CD4-positive, alpha-beta T cell (primary cell): ENCODE measurements at regions of chr1 and their contacts with region 1.

Region 1: DNA sequence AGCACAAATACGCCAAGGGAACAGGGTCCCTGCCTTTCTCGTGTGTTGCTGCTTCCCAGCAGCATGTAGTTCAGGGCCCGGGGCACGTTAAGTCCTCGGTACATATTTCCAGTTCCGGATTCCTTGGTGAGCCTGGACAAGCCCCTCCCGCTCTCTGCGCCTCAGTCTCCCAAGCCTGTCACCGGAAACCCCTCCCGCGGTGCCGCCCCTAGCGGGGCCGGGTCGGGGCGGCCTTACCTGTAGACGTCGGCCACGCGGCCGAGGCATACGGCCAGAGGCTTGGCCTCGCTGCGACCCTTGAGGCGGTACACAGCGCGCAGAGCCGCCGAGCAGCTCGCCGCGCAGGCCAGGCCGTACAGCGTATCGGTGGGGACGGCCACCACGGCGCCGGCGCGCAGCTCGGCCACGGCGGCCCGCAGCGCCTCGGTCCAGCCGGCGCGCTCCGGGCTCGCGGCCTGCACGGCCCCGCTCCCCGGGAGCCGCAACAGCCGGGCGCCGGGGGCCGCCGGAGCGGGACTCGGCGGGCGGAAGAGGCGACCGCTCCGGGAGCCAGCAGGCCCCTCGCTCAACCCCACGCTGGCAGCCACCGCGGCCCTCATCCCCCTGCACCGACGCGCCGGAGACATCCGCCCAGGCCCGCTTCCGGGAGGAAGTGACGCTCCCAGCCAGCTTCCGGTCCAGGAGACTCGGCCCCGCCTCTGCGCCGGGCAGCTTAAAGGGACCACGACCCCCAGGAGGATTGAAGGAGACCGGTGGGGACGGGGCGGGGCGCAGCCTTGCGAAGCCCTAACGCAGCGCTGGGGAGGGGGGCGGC is at the starts of genes C1orf122 and YRDC:
- DNase-seq: peak; percentile 85 to 95 (median 90)
- ATAC-seq: peak; percentile 89
- H3K4me3 ChIP-seq: peak within 1 kb of the TSS; percentile 82
- H3K4me3 Mint-ChIP-seq: peak within 1 kb of the TSS; percentile 97
- H3K27ac ChIP-seq: peak within 1 kb of the TSS; percentile 85
- H3K27ac Mint-ChIP-seq: peak within 1 kb of the TSS; percentile 97
- H3K4me1 ChIP-seq: peaks cover 35% of the 10 kb centered on the region
- H3K4me1 Mint-ChIP-seq: peaks cover 44% of the 10 kb centered on the region
- H3K27me3 ChIP-seq: no peaks in the 10 kb centered on the region
- H3K27me3 Mint-ChIP-seq: no peaks in the 10 kb centered on the region
- CTCF ChIP-seq: no peak
- total RNA-seq, gene C1orf122: 10.9 to 13.2 TPM
- total RNA-seq, gene YRDC: 31.1 to 31.2 TPM

Region 2: DNA sequence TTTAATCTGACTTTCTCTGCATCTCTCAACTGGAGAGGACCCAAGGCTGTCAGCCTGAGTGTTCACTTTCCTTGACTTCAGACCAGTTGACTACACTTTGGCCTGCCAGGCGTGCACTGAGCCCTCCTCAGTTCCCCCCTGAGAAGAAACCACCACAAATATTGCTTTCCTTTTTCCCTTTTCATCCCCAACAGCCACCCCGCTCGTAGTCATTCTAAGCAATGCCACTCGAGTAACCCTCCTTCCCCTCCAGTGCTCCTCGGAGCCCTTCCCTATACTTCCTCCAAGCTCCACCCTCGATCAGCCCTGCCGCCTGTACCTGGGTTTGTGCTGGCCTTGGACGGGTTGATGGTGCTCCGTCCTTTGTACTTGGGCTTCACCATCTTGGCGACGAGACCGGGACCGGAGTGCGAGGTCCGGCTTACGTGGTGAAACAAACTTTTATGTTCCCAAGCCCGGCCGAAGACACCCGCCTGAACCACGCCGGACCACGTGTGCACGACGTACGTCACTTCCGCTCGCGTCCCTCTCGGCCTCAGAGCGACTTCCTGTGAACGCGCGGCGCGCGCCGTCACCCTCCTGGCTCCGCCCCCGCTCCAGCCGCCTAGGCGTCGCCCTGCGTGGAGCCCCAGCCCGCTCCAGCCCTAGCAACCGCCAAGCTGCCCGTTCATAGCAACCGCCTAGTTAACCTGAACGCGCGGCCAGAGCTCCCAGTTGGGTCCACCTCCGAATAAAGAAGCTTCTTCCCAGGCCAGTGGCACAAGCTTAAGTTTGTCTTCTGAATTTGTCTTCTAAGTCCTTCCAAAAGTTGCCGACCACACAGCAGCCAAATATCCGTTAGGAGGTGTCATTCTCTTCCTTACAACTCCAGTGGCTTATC is 212.1 kb before region 1 on chr1 and contains the start of gene GNL2:
- CTCF ChIA-PET with region 1: no interaction called
- POLR2A ChIA-PET with region 1: interaction called, 3 read pairs
- intact Hi-C with region 1: loop called in 1 of 2 experiments (anchors 5 kb)
- DNase-seq: peak; percentile 88 to 99 (median 96)
- ATAC-seq: peak; percentile 93
- H3K4me3 ChIP-seq: peak within 1 kb of the TSS; percentile 93
- H3K4me3 Mint-ChIP-seq: peak within 1 kb of the TSS; percentile 97
- H3K27ac ChIP-seq: peak within 1 kb of the TSS; percentile 75 to 90
- H3K27ac Mint-ChIP-seq: peak within 1 kb of the TSS; percentile 93
- H3K4me1 ChIP-seq: peaks cover 22% of the 10 kb centered on the region
- H3K4me1 Mint-ChIP-seq: peaks cover 34% of the 10 kb centered on the region
- H3K27me3 ChIP-seq: no peaks in the 10 kb centered on the region
- H3K27me3 Mint-ChIP-seq: no peaks in the 10 kb centered on the region
- CTCF ChIP-seq: no peak
- total RNA-seq, gene GNL2: 43.4 to 44.5 TPM

Region 3: GRCh38 chr1:37831809-37832208 is 24.0 kb after region 1 on chr1:
- CTCF ChIA-PET with region 1: no interaction called
- POLR2A ChIA-PET with region 1: no interaction called
- intact Hi-C with region 1: no loop called
- DNase-seq: no peak
- ATAC-seq: no peak
- H3K4me3 ChIP-seq: no peak overlapping the region
- H3K4me3 Mint-ChIP-seq: no peak overlapping the region
- H3K27ac ChIP-seq: no peak overlapping the region
- H3K27ac Mint-ChIP-seq: no peak overlapping the region
- H3K4me1 ChIP-seq: no peaks in the 10 kb centered on the region
- H3K4me1 Mint-ChIP-seq: no peaks in the 10 kb centered on the region
- H3K27me3 ChIP-seq: no peaks in the 10 kb centered on the region
- H3K27me3 Mint-ChIP-seq: no peaks in the 10 kb centered on the region
- CTCF ChIP-seq: no peak

Region 4: DNA sequence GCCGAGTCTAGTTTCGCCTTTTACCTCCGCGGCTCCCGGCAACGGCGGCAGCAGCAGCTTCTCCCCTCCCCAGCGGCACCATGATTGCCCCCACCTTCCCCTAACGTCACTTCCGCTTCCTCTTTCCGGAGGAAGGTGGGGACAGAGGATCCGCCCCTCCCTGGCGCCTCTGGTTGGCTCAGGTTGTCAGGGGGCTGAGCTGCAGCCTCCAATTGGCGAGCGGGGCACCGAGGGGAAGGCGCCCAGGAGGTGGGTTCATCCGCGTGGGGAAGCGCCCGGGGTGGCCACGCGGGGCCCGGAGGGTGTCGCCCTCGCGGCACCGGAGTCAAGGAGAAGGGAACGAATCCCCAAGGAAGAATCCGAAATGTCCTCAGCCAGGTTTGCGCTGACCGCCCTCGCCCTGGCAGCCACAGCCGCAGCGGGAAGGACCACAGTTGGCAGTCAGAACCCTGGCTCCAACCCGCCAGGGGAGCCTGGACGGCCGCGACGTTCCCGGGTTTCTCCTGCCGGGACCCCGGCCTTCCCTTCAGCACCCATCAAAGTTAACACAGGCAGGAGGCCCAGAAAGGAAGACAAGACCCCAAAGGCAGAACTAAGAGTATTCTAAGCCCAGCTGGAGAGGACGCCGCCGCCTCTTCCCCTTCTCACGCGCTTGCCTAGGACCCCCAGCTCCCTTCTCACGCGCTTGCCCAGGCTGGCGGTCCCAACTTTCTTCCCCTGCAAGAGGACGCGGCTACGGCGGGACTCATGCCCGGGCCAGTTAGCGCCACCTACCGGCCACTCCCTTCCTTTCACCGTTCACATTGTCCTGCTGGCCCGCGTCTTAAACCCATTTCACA is 52.0 kb after region 1 on chr1 and contains the start of gene MTF1:
- CTCF ChIA-PET with region 1: interaction called, 13 read pairs
- POLR2A ChIA-PET with region 1: interaction called, 32 read pairs
- intact Hi-C with region 1: loop called (anchors 1 kb)
- DNase-seq: peak; percentile 91 to 99 (median 95)
- ATAC-seq: peak; percentile 98
- H3K4me3 ChIP-seq: peak within 1 kb of the TSS; percentile 88
- H3K4me3 Mint-ChIP-seq: peak within 1 kb of the TSS; percentile 98
- H3K27ac ChIP-seq: peak within 1 kb of the TSS; percentile 81 to 91
- H3K27ac Mint-ChIP-seq: peak within 1 kb of the TSS; percentile 87
- H3K4me1 ChIP-seq: peaks cover 18% of the 10 kb centered on the region
- H3K4me1 Mint-ChIP-seq: peaks cover 41% of the 10 kb centered on the region
- H3K27me3 ChIP-seq: no peaks in the 10 kb centered on the region
- H3K27me3 Mint-ChIP-seq: no peaks in the 10 kb centered on the region
- CTCF ChIP-seq: peak; percentile 91
- total RNA-seq, gene MTF1: 28.1 to 31.2 TPM

Region 5: DNA sequence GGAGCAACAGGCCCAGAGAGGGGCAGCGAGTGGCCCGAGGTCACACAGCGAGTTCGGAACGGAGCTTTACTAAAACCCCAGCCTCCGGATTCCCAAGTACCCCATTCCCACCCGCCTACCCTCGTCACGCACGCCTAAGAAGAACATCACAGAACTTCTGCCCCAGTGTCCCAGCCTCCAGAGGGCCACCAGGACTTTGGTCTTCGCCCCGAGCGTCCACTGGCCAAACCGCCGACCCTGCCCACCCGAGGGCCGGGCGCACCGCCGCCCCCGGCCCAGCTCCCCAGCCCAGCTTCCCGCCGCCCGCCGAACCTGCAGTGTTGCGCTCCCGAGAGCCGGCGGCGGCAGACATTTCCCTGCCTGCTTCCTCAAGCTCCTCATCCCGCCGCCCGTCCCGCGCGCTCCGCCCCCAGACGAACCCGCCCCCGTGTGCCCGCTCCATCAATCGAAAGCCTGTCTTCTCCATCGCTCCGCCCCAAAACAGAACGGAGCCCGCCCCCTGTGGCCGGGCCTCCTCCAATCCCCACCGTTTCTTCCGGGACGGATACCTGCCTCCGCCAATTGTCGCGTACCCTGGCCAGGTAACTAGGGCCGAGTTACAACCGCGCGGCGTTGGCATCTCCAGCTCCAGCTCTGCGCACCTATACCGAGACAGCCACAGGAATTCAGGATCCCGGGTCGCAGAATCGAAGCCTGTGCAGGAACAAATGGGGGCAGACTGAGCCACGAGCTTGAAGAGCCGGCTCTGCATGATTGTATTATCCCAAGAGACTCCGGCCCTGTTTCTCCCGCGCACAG is 123.8 kb after region 1 on chr1:
- CTCF ChIA-PET with region 1: no interaction called
- POLR2A ChIA-PET with region 1: interaction called, 4 read pairs
- intact Hi-C with region 1: loop called in 1 of 2 experiments (anchors 5 kb)
- DNase-seq: peak; percentile 90 to 99 (median 97)
- ATAC-seq: peak; percentile 99
- H3K4me3 ChIP-seq: peak overlapping the region; percentile 93
- H3K4me3 Mint-ChIP-seq: peak overlapping the region; percentile 97
- H3K27ac ChIP-seq: peak overlapping the region; percentile 15 to 46
- H3K27ac Mint-ChIP-seq: peak overlapping the region; percentile 77
- H3K4me1 ChIP-seq: peaks cover 32% of the 10 kb centered on the region
- H3K4me1 Mint-ChIP-seq: peaks cover 38% of the 10 kb centered on the region
- H3K27me3 ChIP-seq: no peaks in the 10 kb centered on the region
- H3K27me3 Mint-ChIP-seq: no peaks in the 10 kb centered on the region
- CTCF ChIP-seq: no peak

Region 6: GRCh38 chr1:37946703-37947360 is 139.1 kb after region 1 on chr1 and contains the start of gene INPP5B:
- CTCF ChIA-PET with region 1: no interaction called
- POLR2A ChIA-PET with region 1: no interaction called
- intact Hi-C with region 1: loop called in 1 of 2 experiments (anchors 2 kb)
- DNase-seq: peak in 13 of 14 experiments; percentile 25 to 81 (median 51)
- ATAC-seq: peak; percentile 83
- H3K4me3 ChIP-seq: peak within 1 kb of the TSS; percentile 61
- H3K4me3 Mint-ChIP-seq: peak within 1 kb of the TSS; percentile 89
- H3K27ac ChIP-seq: peak within 1 kb of the TSS; percentile 15 to 19
- H3K27ac Mint-ChIP-seq: peak within 1 kb of the TSS; percentile 70
- H3K4me1 ChIP-seq: peaks cover 19% of the 10 kb centered on the region
- H3K4me1 Mint-ChIP-seq: peaks cover 16% of the 10 kb centered on the region
- H3K27me3 ChIP-seq: no peaks in the 10 kb centered on the region
- H3K27me3 Mint-ChIP-seq: no peaks in the 10 kb centered on the region
- CTCF ChIP-seq: no peak
- total RNA-seq, gene INPP5B: 11.7 to 12.7 TPM